Activated CD8-positive, alpha-beta T cell treated with anti-CD3 and anti-CD28 coated beads, Interleukin-2, amount 10 ng/mL, durations not matched to agents 7 days and 5 days (primary cell): ENCODE measurements at regions of chr6 and their contacts with region 1.

Region 1: DNA sequence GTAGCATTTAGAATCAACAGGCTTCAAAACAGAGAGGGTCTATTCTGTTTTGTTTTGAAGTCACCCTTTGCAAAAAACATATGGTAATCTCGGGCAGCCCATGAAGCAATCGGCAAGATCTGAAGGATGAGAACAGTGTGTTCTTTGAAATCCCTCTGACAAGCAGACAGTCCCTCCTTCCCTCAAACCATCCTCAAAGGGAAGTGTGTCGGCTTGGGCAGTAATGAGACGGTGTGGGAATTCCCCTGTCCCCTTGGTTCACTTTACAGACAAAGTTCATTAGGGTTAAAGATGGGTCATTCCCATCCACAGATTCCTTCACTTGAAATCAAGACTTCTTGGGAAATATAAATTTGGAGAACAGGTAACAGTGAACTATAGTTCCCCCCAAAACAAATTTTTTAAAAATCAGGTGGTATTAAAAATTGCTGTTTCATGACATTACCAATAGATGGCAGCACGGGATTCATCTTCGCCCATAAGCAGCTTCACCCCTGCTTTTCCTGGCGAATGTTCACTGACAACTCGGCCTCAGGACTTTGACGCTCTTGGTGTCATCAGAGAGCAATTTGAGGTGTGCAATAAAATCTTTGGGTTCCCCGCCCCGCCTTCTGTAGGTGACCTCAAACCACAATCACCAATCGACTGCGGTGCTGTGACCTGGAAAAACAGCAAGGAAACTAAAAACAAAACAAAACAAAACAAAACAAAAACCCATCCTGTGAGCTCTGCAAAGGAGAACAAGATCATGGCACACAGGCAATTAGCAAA is 159.3 kb upstream of the TNFAIP3 start:
- DNase-seq: peak; percentile 88
- ATAC-seq: peak; percentile 82
- H3K4me3 Mint-ChIP-seq: peak overlapping the region; percentile 62
- H3K27ac Mint-ChIP-seq: peak overlapping the region; percentile 89
- H3K4me1 Mint-ChIP-seq: peaks cover 62% of the 10 kb centered on the region
- H3K27me3 Mint-ChIP-seq: no peaks in the 10 kb centered on the region

Region 2: GRCh38 chr6:137610702-137611101 is 97.1 kb before region 1 on chr6:
- CTCF ChIA-PET with region 1: no interaction called
- POLR2A ChIA-PET with region 1: no interaction called
- DNase-seq: no peak
- ATAC-seq: no peak
- H3K4me3 Mint-ChIP-seq: no peak overlapping the region
- H3K27ac Mint-ChIP-seq: no peak overlapping the region
- H3K4me1 Mint-ChIP-seq: no peaks in the 10 kb centered on the region
- H3K27me3 Mint-ChIP-seq: peaks cover 15% of the 10 kb centered on the region

Region 3: GRCh38 chr6:137791281-137792159 is 83.7 kb after region 1 on chr6:
- CTCF ChIA-PET with region 1: interaction called, 13 read pairs
- POLR2A ChIA-PET with region 1: interaction called, 4 read pairs
- DNase-seq: no peak
- ATAC-seq: no peak
- H3K4me3 Mint-ChIP-seq: peak overlapping the region; percentile 46
- H3K27ac Mint-ChIP-seq: no peak overlapping the region
- H3K4me1 Mint-ChIP-seq: peaks cover 60% of the 10 kb centered on the region
- H3K27me3 Mint-ChIP-seq: no peaks in the 10 kb centered on the region

Region 4: DNA sequence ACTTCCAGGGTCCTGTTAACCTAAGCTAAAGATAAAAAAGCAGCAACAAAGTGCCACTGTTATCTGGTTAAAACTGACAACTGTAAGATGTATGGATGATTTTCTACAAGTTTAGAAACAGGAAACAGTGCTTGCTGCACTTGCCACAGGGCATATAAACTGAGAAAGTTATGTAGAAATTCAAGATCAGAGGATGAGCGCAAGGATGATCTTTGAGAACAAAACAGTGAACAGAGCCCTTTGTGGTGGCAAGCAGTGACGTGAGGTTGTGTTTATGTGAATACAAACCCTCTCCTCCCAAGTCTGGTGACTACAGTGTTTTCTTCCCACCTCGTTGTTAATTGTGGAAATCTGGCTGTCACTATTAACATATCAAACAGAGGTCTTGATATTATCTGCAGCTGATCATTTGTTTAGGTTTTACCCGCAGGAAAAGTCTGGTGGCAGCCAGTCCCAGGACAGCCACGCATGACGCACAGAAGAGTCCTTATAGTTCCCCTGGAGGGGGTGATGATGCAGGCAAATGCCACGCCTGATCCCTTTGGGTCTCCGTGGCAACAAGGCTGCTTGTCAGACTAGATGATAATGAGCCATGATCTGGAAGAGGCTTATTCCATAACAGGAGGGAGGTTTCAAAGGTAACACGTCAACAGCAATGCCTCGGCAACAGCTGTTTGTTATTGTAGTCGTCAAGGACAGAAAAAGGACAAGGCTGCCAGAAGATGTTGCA is 116.2 kb after region 1 on chr6:
- CTCF ChIA-PET with region 1: interaction called, 16 read pairs
- POLR2A ChIA-PET with region 1: interaction called, 11 read pairs
- DNase-seq: peak; percentile 75
- ATAC-seq: peak; percentile 74
- H3K4me3 Mint-ChIP-seq: peak overlapping the region; percentile 70
- H3K27ac Mint-ChIP-seq: peak overlapping the region; percentile 97
- H3K4me1 Mint-ChIP-seq: peaks cover 82% of the 10 kb centered on the region
- H3K27me3 Mint-ChIP-seq: no peaks in the 10 kb centered on the region

Region 5: DNA sequence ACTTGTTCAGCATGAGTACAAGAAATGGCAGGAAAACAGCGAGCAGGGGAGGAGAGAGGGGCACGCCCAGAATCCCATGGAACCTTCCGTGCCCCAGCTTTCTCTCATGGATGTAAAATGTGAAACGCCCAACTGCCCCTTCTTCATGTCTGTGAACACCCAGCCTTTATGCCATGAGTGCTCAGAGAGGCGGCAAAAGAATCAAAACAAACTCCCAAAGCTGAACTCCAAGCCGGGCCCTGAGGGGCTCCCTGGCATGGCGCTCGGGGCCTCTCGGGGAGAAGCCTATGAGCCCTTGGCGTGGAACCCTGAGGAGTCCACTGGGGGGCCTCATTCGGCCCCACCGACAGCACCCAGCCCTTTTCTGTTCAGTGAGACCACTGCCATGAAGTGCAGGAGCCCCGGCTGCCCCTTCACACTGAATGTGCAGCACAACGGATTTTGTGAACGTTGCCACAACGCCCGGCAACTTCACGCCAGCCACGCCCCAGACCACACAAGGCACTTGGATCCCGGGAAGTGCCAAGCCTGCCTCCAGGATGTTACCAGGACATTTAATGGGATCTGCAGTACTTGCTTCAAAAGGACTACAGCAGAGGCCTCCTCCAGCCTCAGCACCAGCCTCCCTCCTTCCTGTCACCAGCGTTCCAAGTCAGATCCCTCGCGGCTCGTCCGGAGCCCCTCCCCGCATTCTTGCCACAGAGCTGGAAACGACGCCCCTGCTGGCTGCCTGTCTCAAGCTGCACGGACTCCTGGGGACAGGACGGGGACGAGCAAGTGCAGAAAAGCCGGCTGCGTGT is 170.9 kb after region 1 on chr6:
- CTCF ChIA-PET with region 1: interaction called, 13 read pairs
- POLR2A ChIA-PET with region 1: no interaction called
- DNase-seq: no peak
- ATAC-seq: no peak
- H3K4me3 Mint-ChIP-seq: no peak overlapping the region
- H3K27ac Mint-ChIP-seq: peak overlapping the region; percentile 46
- H3K4me1 Mint-ChIP-seq: peaks cover 75% of the 10 kb centered on the region
- H3K27me3 Mint-ChIP-seq: no peaks in the 10 kb centered on the region

Region 6: DNA sequence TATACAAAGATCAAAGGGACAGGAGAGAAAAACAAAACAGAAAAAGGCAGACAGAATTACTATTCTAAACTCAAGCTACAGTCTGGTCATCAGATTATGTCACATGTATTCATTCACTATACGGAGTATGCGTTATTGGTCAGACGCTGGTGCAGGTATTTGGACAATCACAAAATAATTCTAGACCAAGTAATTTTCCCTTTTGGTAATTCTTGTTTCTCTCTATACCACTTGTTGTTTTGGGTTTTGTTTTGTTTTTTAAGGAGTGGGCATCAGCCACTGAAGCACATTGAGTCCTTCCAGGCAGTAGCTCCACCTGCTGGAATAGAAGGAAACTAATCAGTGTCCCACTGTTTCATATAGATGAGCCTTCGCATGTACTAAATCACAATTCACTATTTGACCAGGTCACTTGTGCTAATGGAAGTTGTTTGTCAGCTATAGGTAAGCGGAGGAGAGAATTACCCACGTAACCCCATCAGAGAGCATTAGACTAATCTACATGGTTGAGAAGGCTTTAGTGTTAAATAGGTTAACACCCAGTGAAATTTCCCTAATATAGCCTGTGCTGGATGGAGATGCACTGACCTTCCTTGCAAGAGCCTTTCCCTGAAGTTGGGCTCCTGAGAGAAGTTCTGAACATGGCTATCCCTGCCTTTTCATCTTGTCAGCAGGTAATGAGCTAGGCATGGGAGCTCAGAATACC is 237.2 kb after region 1 on chr6:
- CTCF ChIA-PET with region 1: interaction called, 58 read pairs
- POLR2A ChIA-PET with region 1: interaction called, 9 read pairs
- DNase-seq: no peak
- ATAC-seq: peak; percentile 65
- H3K4me3 Mint-ChIP-seq: no peak overlapping the region
- H3K27ac Mint-ChIP-seq: no peak overlapping the region
- H3K4me1 Mint-ChIP-seq: peaks cover 24% of the 10 kb centered on the region
- H3K27me3 Mint-ChIP-seq: no peaks in the 10 kb centered on the region

Region 7: GRCh38 chr6:138001750-138002349 is 294.1 kb after region 1 on chr6:
- CTCF ChIA-PET with region 1: interaction called, 15 read pairs
- POLR2A ChIA-PET with region 1: no interaction called
- DNase-seq: peak; percentile 74
- ATAC-seq: peak; percentile 36
- H3K4me3 Mint-ChIP-seq: no peak overlapping the region
- H3K27ac Mint-ChIP-seq: no peak overlapping the region
- H3K4me1 Mint-ChIP-seq: peaks cover 14% of the 10 kb centered on the region
- H3K27me3 Mint-ChIP-seq: peaks cover 2% of the 10 kb centered on the region

Region 8: GRCh38 chr6:138765896-138766655 is 1058.3 kb after region 1 on chr6:
- CTCF ChIA-PET with region 1: no interaction called
- POLR2A ChIA-PET with region 1: no interaction called
- DNase-seq: no peak
- ATAC-seq: no peak
- H3K4me3 Mint-ChIP-seq: no peak overlapping the region
- H3K27ac Mint-ChIP-seq: no peak overlapping the region
- H3K4me1 Mint-ChIP-seq: no peaks in the 10 kb centered on the region
- H3K27me3 Mint-ChIP-seq: no peaks in the 10 kb centered on the region